Cardiac septum (tissue), 1 donor: ENCODE measurements at regions of chr3 and their contacts with region 1.

Region 1: GRCh38 chr3:100708967-100709841 is at the start of gene TFG:
- DNase-seq: peak; percentile 99
- total RNA-seq, gene TFG: 93.0 TPM

Region 2: DNA sequence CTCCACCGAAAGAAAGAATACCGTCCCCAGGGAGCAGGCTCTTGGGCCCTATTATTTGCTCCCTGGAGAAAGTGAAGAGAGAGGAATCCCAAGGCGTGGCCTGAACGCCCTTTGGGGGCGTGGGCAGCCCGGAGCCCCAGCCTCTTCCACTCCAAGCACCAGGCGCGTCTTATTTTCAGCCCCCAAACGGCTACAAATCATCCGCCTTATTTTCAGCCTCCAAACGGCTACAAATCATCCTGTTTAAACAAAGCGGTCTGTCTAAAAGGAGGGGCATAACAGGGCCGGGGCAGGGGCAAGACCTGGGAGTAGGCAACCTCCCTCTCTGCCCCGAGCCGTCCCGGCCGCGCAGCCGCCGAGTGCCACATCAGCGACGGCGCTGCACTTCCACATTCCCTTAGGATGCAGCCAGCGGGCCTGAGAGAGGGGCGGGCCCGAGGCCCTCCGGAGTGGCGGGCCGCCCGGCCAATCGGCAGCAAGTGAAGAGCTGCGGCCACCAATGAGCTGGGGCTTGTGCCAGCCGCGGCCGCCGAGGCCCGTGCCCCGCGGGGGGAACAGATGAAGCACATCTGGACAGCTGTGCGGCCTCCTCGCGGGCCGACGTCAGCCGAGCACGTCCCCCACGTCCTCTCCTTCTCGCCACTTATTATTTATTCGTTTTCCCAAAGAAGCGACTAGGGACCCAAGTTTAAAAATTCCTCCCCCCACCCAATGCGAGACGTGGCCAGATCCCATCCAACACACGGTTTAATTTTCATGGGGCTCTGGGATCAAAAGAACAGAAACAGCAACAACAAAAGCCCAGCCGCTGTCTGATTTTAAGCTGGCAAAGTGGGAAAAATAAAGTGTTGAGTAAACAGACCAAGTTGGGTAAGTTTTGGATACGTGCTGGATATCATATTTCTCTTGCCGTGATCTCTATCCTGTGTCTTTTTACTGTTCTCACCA is 216.9 kb before region 1 on chr3 and contains the start of gene TMEM45A:
- intact Hi-C with region 1: loop called (anchors 10 kb)
- DNase-seq: peak; percentile 96
- total RNA-seq, gene TMEM45A: 4.8 TPM

Region 3: GRCh38 chr3:100844063-100844936 is 135.1 kb after region 1 on chr3:
- intact Hi-C with region 1: no loop called
- DNase-seq: no peak

Region 4: DNA sequence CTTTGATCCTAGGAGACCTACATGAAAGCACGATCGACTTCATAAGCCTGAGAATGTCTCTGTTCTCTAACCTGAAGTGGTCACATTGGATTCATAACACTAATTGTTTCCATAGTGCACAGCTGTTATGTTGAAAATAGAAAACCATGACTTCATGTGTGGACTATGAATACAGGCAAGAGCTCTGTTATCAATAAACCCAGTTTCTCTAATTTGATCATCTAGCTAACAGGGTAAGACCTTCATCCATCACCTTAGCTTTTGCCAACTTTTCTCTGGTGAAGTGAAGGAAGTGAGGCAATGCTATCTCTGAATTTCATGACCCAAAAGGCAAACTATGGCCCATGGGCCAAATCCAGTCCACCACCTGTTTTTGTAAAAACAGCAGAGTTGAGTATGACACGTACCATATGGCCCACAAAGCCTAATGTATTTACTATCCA is 256.9 kb after region 1 on chr3:
- intact Hi-C with region 1: no loop called
- DNase-seq: no peak